Activated naive CD4-positive, alpha-beta T cell treated with anti-CD3 and anti-CD28 coated beads for 36 hours (primary cell): ENCODE measurements at regions of chr14 and their contacts with region 1.

Region 1: DNA sequence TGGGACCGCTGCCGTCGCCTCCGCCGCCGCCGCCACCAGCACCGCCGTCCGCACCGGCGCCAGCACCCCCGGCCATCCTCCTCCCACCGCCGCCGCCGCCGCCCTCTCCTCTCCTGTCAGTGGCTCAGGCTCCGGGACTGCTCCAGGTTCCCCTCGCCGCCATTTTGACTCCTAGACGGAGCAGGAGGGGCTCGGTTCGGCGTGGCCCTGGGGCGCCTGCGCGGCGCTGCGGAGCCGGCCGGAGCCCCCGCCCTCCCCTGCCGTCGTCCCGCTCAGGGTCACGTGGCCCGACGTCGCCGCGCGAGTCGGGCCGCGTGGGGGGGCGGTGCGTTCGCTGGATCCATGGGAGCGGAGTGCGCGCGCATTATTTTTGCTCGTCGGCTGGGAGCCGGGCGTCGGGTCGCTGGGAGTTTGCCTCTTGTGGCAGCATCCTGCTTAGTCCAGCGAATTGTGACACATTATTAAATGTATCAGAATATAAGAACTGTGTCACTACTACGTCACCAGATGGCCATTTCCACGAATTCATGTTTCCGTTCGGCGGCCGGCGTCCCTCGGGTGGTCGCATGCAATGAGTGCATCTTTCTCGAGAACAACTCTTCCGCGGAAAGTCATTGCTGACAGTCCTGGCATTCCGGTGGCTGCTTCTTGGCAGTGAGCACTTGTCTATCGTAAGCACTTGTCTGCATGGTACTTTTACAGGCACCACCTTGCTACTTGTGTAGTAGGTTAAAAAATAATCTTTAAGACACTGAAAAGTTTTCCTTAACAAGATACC is at the start of gene BTBD7:
- DNase-seq: peak; percentile 94
- H3K4me3 Mint-ChIP-seq: peak within 1 kb of the TSS; percentile 89
- H3K27ac Mint-ChIP-seq: peak within 1 kb of the TSS; percentile 83
- H3K4me1 Mint-ChIP-seq: peaks cover 49% of the 10 kb centered on the region
- H3K27me3 Mint-ChIP-seq: no peaks in the 10 kb centered on the region
- total RNA-seq, gene BTBD7: 7.2 to 7.7 TPM

Region 2: DNA sequence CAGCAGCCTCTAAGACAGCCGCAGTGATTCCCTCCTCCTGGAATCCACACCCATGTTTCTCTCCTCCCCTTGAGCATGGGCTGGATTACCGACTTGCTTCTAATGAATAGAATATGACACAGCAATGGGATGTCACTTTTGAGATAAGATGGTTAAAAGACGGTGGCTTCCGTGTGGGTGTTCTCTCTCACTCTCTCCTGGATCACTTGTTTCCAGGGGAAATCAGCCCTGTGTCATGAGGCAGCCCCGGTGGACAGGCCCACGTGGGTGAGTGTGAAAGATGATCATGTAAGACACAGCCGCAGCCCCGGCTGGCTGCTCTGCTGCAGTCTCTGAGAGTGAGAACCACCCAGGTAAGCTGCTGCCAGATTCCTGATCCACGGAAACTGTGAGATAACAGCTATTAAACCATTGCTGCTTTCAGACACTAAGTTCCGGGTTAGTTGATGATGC is 159.1 kb before region 1 on chr14:
- CTCF ChIA-PET with region 1: no interaction called
- intact Hi-C with region 1: no loop called
- DNase-seq: no peak
- H3K4me3 Mint-ChIP-seq: no peak overlapping the region
- H3K27ac Mint-ChIP-seq: no peak overlapping the region
- H3K4me1 Mint-ChIP-seq: no peaks in the 10 kb centered on the region
- H3K27me3 Mint-ChIP-seq: no peaks in the 10 kb centered on the region

Region 3: DNA sequence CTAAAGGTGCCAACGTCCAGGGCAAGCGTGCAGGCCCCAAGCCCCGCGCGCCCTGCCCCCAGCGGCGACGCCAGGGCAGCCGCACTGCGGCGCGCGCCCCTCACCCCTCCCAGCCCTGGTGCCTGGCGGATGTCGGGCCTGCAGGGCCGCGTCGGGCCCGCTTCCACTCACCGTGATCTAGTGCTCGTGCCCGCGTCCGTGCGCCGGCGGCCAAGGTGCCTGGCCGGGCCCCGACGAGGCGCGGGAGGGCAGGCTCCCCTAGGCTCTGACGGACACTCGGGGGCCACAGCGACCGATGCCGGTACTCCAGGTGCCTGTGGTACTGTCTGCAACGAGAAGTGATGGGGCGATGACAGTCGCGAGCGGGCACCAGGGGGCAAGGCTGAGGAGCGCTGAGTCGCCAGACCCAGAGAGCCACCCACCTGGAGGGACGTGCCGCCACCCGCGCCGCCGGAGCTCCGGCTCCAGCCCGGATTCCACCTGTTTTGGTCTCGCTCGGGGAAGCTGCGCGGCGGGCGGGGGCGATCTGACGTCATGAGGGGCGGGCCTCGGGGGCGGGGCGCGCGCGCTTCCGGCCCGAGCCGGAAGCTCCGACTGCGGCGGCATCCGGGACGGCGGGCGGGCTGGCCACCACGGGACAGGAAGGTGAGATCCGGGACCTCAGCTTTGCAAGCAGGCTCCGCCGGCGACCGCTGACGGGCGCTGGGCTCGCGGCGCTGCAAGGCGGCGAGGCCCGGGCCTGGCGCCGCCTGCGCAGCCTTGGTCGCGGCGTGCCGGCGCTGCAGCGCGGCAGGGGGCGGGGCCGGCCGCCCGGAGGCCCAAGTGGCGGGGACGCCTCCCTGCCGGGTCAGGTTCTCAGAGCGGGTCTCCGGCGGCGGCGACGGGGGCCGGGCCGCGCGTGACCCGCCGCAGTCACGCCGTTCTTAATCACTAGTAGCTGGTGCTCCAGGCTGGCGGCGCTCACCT is 148.4 kb before region 1 on chr14 and contains the starts of genes LYSET and MOAP1:
- CTCF ChIA-PET with region 1: interaction called, 5 read pairs
- intact Hi-C with region 1: loop called (anchors 1 kb)
- DNase-seq: peak; percentile 91
- H3K4me3 Mint-ChIP-seq: peak within 1 kb of the TSS; percentile 88
- H3K27ac Mint-ChIP-seq: peak within 1 kb of the TSS; percentile 91
- H3K4me1 Mint-ChIP-seq: peaks cover 42% of the 10 kb centered on the region
- H3K27me3 Mint-ChIP-seq: no peaks in the 10 kb centered on the region
- total RNA-seq, gene LYSET: 11.4 to 11.6 TPM
- total RNA-seq, gene MOAP1: 11.9 to 13.1 TPM

Region 4: GRCh38 chr14:93206793-93207467 is 126.1 kb before region 1 on chr14 and contains the starts of genes GON7 and UBR7:
- CTCF ChIA-PET with region 1: interaction called, 4 read pairs
- intact Hi-C with region 1: loop called (anchors 1 kb)
- DNase-seq: peak; percentile 95
- H3K4me3 Mint-ChIP-seq: peak within 1 kb of the TSS; percentile 92
- H3K27ac Mint-ChIP-seq: peak within 1 kb of the TSS; percentile 83
- H3K4me1 Mint-ChIP-seq: peaks cover 32% of the 10 kb centered on the region
- H3K27me3 Mint-ChIP-seq: no peaks in the 10 kb centered on the region
- total RNA-seq, gene GON7: 4.8 to 7.0 TPM
- total RNA-seq, gene UBR7: 43.0 to 45.0 TPM

Region 5: DNA sequence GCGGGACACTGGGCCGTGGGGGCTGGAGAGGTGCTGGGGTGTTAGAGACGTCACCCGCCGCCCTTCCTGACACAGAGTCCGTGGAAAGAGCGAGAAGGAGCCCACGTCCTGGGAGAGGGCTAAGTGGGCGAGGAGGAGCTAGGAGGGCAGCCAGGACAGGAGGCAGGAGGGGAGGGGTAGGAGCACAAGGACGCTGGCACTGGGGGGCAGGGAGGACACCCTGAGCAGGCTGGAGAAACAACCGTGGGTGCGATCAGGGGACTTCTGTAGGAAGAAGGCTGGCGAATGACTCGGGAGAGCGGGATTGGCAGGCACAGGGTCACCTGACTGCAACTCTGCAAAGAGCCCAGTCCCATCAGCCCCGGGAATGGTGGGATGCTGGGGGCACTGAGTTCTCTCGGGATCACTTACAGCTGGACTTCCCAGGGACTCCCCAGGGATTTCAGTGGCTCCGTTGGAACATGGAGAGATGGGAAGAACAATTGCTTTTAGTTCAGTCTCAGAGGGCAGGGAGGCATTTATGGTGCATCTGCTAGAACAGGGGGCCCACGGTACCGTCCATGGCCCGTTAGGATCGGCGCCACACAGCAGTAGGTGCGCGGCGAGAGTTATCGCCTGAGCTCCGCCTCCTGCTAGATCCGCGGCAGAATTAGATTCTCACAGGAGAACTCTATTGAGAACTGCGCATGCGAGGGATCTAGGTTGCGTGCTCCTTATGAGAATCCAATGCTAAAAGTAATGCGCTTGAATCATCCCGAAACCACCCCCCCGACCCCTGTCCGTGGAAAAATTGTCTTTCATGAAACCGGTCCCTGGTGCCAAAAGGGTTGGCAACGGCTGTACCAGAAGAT is 101.7 kb before region 1 on chr14:
- CTCF ChIA-PET with region 1: interaction called, 3 read pairs
- intact Hi-C with region 1: loop called (anchors 10 kb)
- DNase-seq: no peak
- H3K4me3 Mint-ChIP-seq: peak overlapping the region; percentile 67
- H3K27ac Mint-ChIP-seq: no peak overlapping the region
- H3K4me1 Mint-ChIP-seq: peaks cover 15% of the 10 kb centered on the region
- H3K27me3 Mint-ChIP-seq: peaks cover 9% of the 10 kb centered on the region

Region 6: GRCh38 chr14:93975791-93976476 is 642.9 kb after region 1 on chr14:
- CTCF ChIA-PET with region 1: no interaction called
- intact Hi-C with region 1: loop called (anchors 2 kb)
- DNase-seq: peak; percentile 65
- H3K4me3 Mint-ChIP-seq: peak overlapping the region; percentile 55
- H3K27ac Mint-ChIP-seq: peak overlapping the region; percentile 95
- H3K4me1 Mint-ChIP-seq: peaks cover 85% of the 10 kb centered on the region
- H3K27me3 Mint-ChIP-seq: no peaks in the 10 kb centered on the region

Region 7: GRCh38 chr14:94392510-94392935 is 1059.5 kb after region 1 on chr14:
- CTCF ChIA-PET with region 1: no interaction called
- intact Hi-C with region 1: loop called (anchors 5 kb)
- DNase-seq: peak; percentile 85
- H3K4me3 Mint-ChIP-seq: no peak overlapping the region
- H3K27ac Mint-ChIP-seq: peak overlapping the region; percentile 82
- H3K4me1 Mint-ChIP-seq: peaks cover 48% of the 10 kb centered on the region
- H3K27me3 Mint-ChIP-seq: no peaks in the 10 kb centered on the region